ENCODE measurements at regions of chr17 and their contacts with region 1.

Region 1: DNA sequence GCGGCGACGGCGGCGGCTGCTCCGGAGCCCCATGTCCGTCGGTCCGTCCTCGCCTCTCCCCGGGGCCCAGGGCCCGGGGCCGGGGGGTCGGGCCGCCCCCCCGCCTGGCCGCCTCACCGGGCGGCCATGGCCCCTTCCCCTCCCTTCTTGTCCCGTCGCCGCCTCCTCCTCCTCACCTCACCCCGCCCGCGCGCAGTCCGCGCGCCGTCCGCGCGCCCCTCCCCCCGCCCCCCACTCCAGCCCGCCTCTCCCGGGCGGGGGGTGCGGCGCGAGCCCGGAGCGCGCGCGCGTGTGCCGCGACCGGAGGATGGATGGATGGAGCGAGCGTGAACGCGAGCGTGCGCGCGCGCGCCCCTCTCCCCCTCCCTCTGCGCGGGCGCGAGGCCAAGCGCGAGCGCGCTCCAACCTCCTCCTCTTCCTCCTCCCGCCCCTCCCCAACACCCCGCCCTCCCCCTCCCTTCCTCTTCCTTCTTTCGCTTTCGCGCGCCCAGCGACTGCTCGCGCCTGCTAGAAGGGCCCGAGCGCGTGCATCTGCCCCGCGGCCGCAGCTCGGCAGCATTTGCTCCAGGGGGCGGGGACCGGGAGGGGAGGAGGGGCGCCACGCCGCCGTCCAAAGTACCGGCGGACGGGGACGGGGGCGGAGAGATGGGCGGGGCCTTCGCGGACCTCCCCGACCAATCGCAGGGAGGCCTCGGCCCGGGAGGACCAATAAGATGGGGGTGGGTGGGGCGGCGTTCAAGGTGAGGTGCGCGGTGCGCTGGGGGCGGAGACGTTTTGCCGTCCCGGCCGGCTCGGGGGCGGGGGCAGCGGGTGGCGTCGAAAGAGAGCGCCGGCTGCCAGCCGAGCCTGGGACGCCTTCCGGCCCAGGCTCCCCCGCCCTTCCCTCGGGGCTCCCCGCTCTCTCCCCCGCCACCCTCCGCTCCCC is at the start of gene ATXN7L3:
- DNase-seq: peak; percentile 99
- H3K4me3 ChIP-seq: peak within 1 kb of the TSS; percentile 83
- H3K27ac ChIP-seq: peak within 1 kb of the TSS; percentile 94 to 95
- H3K4me1 ChIP-seq: no peaks in the 10 kb centered on the region
- H3K27me3 ChIP-seq: no peaks in the 10 kb centered on the region
- CTCF ChIP-seq: no peak
- EP300 ChIP-seq: no peak
- POLR2A ChIP-seq: no peak
- total RNA-seq, gene ATXN7L3: 25.3 to 97.4 (median 72.6) TPM

Region 2: DNA sequence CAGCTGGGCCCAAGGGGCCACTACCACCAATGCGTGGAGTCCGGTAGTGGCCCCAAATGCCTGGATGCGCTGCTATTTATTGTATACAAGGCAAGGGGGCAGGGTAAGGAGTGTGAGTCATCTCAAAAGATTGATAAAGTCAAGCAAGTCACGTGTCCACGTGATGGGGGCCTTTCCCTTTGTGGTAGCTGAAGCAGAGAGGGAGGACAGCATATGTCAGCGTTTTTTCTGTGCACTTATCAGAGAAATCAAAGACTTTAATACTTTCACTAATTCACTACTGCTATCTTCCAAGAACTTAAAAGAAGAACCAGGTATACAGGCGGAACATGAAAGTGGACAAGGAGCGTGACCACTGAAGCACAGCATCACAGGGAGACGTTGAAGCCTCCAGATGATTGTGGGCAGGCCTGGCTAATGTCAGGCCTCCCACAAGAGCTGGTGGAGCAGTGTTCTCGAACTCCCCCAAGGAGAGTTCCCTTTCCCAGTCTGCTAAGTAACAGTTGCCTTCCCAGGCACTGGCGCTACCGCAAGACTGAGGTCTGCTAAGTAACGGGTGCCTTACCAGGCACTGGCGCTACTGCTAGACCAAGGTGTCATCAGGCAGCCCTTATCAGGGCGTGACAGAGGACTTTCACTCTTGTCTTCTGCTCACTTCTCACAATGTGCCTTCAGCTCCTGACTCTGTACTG is 40.1 kb before region 1 on chr17:
- intact Hi-C with region 1: no loop called
- DNase-seq: no peak
- H3K4me3 ChIP-seq: no peak overlapping the region
- H3K27ac ChIP-seq: no peak overlapping the region
- H3K4me1 ChIP-seq: no peaks in the 10 kb centered on the region
- H3K27me3 ChIP-seq: no peaks in the 10 kb centered on the region
- CTCF ChIP-seq: no peak
- EP300 ChIP-seq: no peak
- POLR2A ChIP-seq: no peak

Region 3: DNA sequence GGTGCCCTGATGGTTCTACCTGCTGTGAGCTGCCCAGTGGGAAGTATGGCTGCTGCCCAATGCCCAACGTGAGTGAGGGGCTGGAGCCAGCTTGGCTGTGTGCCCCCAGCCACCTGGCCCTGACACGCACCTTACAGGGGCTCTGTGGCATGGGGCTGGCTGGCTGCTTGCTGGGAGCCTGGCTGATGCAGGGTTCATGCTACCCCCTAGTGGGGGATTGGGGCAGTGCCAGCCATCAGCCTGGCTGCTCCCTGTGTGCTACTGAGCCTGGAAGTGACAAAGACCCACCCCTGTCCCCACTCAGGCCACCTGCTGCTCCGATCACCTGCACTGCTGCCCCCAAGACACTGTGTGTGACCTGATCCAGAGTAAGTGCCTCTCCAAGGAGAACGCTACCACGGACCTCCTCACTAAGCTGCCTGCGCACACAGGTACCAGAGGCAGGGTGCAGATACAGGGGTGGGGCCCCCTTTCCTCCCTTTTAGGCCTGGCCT is 151.0 kb after region 1 on chr17:
- intact Hi-C with region 1: loop called in 1 of 4 experiments (anchors 10 kb)
- DNase-seq: peak; percentile 46 to 74 (median 66)
- H3K4me3 ChIP-seq: no peak overlapping the region
- H3K27ac ChIP-seq: no peak overlapping the region
- H3K4me1 ChIP-seq: peaks cover 4% of the 10 kb centered on the region
- H3K27me3 ChIP-seq: no peaks in the 10 kb centered on the region
- CTCF ChIP-seq: peak; percentile 28 to 56 (median 38)
- EP300 ChIP-seq: no peak
- POLR2A ChIP-seq: no peak